Mammary epithelial cell (primary cell): ENCODE measurements at regions of chr20 and their contacts with region 1.

Region 1: DNA sequence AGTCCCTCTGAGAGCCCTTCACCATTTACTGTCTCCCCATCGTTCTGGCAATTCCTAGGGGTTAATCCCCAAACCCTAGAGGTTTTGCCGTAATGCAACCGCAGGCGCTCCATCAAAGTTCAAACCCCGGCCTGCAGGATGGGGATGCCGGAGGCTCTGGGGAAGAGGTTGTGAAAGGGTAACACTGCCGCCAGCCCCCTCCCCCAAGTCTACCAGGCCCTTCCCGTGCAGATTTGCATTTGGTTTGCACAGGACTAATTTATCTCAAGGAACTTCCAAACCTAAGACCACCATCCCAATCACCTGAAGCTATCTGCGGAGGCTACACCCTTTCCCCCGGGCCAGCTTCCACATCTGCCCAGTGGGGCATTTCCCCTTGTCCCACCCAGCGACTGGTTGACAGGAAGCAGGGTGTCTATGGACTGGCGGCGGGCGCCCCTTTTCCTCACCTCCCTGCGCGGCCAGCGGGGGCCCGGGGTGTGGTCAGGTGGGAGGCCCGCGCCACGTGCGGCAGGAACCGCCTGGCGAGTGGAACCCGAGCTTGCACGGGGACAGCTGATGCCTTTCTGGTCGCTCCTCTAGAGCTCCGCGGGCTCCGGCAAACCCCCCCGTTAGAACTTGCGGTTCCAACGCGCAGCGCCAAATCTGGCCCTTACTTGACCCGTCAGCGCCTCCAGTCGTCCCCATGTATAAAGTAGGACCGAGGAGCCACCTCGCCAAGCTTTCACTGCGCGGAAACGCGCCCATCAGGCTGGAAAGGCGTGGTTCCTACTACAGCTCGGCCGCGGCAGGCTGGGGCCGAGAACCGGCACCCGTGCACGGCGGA is 9.4 kb upstream of the SLC4A11 start:
- DNase-seq: no peak
- H3K4me3 ChIP-seq: no peak overlapping the region
- H3K27ac ChIP-seq: no peak overlapping the region
- H3K4me1 ChIP-seq: no peaks in the 10 kb centered on the region
- H3K27me3 ChIP-seq: no peaks in the 10 kb centered on the region
- CTCF ChIP-seq: no peak

Region 2: GRCh38 chr20:3084986-3085360 is 163.4 kb before region 1 on chr20:
- CTCF ChIA-PET with region 1: no interaction called
- dilution Hi-C with region 1: loop called (anchors 5 kb)
- in situ Hi-C with region 1: no loop called
- intact Hi-C with region 1: no loop called
- DNase-seq: no peak
- H3K4me3 ChIP-seq: no peak overlapping the region
- H3K27ac ChIP-seq: no peak overlapping the region
- H3K4me1 ChIP-seq: no peaks in the 10 kb centered on the region
- H3K27me3 ChIP-seq: peaks cover 24% of the 10 kb centered on the region
- CTCF ChIP-seq: no peak

Region 3: GRCh38 chr20:3218307-3218988 is 29.9 kb before region 1 on chr20:
- CTCF ChIA-PET with region 1: no interaction called
- dilution Hi-C with region 1: no loop called
- in situ Hi-C with region 1: no loop called
- intact Hi-C with region 1: loop called (anchors 1 kb)
- DNase-seq: peak; percentile 12
- H3K4me3 ChIP-seq: no peak overlapping the region
- H3K27ac ChIP-seq: no peak overlapping the region
- H3K4me1 ChIP-seq: peaks cover 13% of the 10 kb centered on the region
- H3K27me3 ChIP-seq: no peaks in the 10 kb centered on the region
- CTCF ChIP-seq: peak; percentile 72 to 87

Region 4: DNA sequence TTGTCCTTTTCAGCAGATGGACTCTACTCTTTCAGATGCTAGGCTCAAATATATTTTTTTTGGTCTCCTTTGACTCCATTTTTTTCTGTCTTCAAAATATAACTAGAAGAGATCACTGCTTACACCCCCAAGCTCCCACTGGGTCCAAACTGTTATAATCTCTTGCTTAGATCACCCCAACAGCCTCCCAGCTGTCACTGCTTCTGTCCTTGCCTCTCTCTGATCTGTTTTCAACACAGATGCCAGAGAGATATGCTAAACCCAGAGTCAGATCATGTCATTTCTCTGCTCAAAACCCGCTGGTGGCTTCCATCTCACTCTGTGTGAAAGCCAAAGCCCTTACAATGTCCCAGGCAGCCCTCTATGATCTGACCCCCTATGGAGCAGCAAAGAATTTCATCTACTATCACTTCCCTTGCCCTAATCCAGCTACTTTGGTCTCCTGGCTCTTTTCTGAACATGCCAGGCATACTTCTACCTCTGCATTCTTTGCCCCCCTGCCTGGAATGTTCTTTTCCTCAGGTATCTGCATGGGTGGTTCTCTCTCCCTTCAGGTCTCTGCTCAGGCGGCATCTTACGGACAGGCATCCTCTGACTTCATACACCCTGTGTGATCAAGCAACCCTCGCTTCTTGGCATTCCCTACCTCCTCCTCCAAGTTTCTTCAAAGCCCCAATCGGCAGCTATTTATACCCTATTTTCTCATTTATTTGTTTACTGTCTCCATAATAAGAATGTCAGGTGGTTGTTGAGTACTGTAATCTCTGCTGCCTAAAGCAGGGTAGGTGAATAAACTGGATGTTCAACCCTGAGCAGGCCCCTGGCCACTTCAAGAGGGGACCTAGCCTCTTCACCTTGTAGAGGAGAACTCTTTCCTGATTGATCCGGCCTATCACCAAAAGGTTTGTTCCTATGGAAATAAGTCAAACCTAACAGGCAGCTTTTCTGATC is 34.2 kb after region 1 on chr20:
- CTCF ChIA-PET with region 1: no interaction called
- dilution Hi-C with region 1: loop called (anchors 5 kb)
- in situ Hi-C with region 1: no loop called
- intact Hi-C with region 1: no loop called
- DNase-seq: no peak
- H3K4me3 ChIP-seq: no peak overlapping the region
- H3K27ac ChIP-seq: no peak overlapping the region
- H3K4me1 ChIP-seq: no peaks in the 10 kb centered on the region
- H3K27me3 ChIP-seq: no peaks in the 10 kb centered on the region
- CTCF ChIP-seq: no peak

Region 5: DNA sequence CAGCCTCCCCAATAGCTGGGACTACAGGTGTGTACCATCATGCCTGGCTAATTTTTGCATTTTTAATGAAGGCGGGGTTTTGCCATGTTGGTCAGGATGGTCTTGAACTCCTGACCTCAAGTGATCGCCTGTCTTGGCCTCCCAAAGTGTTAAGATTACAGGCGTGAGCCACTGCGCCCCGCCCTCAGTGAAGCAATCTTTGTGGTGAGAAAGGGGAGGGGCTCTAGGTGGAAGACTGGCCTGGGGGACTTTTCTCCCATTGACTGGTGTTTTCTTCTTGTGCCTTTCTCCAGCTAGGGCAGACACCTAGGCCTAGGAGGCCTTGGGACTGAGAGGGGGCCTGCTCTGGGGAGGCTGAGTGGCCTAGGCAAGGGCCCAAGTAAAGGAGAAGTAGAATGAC is 75.0 kb after region 1 on chr20:
- CTCF ChIA-PET with region 1: no interaction called
- dilution Hi-C with region 1: loop called (anchors 5 kb)
- in situ Hi-C with region 1: no loop called
- intact Hi-C with region 1: no loop called
- DNase-seq: peak; percentile 52
- H3K4me3 ChIP-seq: no peak overlapping the region
- H3K27ac ChIP-seq: no peak overlapping the region
- H3K4me1 ChIP-seq: peaks cover 7% of the 10 kb centered on the region
- H3K27me3 ChIP-seq: no peaks in the 10 kb centered on the region
- CTCF ChIP-seq: no peak